ENCODE measurements at regions of chr6 and their contacts with region 1.

Region 1: DNA sequence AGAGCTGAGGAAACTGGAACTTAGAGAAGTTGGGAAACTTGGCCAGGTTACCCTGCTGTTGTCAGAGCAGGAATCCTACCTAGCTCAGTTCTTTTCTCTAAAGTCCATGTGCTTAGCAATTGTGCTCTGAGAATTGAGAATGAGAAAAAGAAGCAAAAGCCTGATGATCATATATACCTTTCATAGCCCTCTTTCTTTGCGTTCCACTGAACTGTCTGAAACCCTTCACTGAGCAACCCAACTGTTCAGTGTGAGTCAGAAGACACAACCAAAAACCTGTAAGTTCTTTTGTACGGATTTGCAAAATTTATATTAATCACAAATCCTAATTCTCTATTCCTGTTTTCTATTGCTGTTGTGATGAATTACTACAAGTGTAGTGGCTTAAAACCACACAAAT is 80.6 kb downstream of the PHF3 start:
- DNase-seq: no peak
- ATAC-seq: no peak
- H3K4me3 ChIP-seq: no peak overlapping the region
- H3K27ac ChIP-seq: no peak overlapping the region
- H3K4me1 ChIP-seq: no peaks in the 10 kb centered on the region
- H3K27me3 ChIP-seq: no peaks in the 10 kb centered on the region
- CTCF ChIP-seq: no peak

Region 2: GRCh38 chr6:63504777-63505384 is 211.3 kb before region 1 on chr6:
- intact Hi-C with region 1: no loop called
- DNase-seq: no peak
- ATAC-seq: peak in 3 of 4 donors; percentile 30 to 64 (median 41)
- H3K4me3 ChIP-seq: no peak overlapping the region
- H3K27ac ChIP-seq: no peak overlapping the region
- H3K4me1 ChIP-seq: peaks cover 8% of the 10 kb centered on the region
- H3K27me3 ChIP-seq: no peaks in the 10 kb centered on the region
- CTCF ChIP-seq: no peak

Region 3: GRCh38 chr6:63683071-63683603 is 33.0 kb before region 1 on chr6:
- intact Hi-C with region 1: loop called in 1 of 2 experiments (anchors 5 kb)
- DNase-seq: no peak
- ATAC-seq: no peak
- H3K4me3 ChIP-seq: no peak overlapping the region
- H3K27ac ChIP-seq: no peak overlapping the region
- H3K4me1 ChIP-seq: peaks cover under 1% of the 10 kb centered on the region
- H3K27me3 ChIP-seq: no peaks in the 10 kb centered on the region
- CTCF ChIP-seq: no peak

Measured in psoas muscle (tissue), 8 donors.